Cardiac septum (tissue), 1 donor: ENCODE measurements at regions of chr7 and their contacts with region 1.

Region 1: DNA sequence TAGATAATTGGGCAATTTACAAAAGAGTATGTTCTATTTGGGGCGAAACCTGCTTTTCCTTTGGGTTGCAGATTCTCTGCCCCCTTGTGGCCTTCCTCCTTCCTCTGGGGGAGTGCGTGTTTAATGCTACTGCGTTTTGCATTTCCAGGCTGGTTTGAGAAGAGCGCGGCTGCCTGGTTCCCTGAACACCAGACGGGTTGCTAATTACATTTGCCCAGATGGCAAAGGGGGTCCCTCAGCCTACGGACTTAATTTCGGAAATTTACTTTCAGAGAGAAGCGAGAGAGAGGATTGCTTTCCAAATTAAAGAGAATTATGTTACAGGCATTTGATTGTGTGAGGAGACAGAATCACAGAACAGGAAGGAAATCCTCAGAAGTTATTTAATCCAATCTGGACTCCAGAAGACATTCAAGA is 91.9 kb upstream of the JAZF1 start:
- DNase-seq: no peak

Region 2: DNA sequence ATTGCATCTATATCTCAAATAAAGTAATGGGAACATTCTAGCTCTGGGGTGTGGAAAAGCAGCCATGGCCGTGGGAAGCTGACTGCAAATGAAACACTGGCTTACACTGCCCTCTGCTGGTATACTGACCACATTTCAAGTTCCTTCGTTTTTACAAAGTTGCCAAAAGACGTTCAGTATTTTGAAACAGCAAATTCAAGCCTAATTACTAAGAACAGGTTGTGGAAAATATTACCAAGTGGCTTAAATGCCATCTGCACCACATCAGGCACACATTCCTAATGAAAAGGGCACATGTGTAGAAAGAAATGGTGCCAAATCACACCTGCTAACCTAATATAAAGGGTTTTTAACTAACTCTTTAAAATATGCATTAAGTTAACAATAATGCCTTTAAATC is 175.8 kb before region 1 on chr7:
- intact Hi-C with region 1: loop called (anchors 10 kb)
- DNase-seq: no peak

Region 3: GRCh38 chr7:28125431-28126409 is 146.7 kb before region 1 on chr7:
- intact Hi-C with region 1: loop called (anchors 10 kb)
- DNase-seq: no peak

Region 4: GRCh38 chr7:28179120-28180030 is 93.1 kb before region 1 on chr7:
- intact Hi-C with region 1: loop called (anchors 10 kb)
- DNase-seq: peak; percentile 93

Region 5: DNA sequence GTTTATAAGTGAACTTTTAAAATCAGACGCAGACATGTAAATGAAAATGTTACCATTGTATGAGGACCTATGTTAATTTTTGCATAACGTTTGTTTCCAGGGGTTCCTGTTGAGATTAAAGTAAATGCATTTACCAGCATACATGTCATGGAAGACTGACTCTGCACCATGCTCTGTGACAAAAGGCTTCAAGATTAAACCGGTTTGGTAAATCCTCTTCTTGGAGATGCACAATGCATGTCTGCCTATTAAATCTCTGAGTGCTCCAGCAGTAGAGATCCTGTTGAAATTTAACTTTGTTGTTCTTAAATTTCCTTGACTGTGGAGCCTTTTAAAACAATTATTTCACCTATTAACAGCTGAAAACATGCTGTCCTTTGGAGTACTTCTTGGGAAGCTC is 55.3 kb before region 1 on chr7:
- intact Hi-C with region 1: no loop called
- DNase-seq: no peak

Region 6: DNA sequence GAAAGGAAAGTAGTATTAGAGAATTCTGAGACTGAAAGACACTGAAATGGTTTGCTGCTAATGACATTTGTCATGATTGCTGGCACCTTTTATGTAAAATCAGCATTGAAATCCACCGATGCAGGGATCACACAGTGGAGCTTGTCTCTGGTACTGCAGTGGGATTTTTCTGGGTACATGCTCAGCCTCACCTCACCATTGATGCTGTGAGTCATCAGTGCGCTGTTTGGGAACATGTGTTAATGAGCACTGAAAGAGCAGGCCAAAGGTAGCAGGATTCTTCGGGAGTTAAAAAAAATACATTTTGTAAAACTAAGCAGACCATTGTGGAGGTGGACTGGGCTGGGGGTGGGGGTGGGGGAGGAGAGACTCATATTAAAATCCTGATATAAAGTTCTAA is 314.7 kb after region 1 on chr7:
- intact Hi-C with region 1: no loop called
- DNase-seq: no peak